Aorta (tissue), 5 donors: ENCODE measurements at regions of chr4 and their contacts with region 1.

Region 1: GRCh38 chr4:40149960-40150385 is 46.9 kb upstream of the RHOH start:
- DNase-seq: no peak
- ATAC-seq: no peak
- H3K4me3 ChIP-seq: no peak overlapping the region
- H3K27ac ChIP-seq: no peak overlapping the region
- H3K4me1 ChIP-seq: no peaks in the 10 kb centered on the region
- H3K27me3 ChIP-seq: no peaks in the 10 kb centered on the region

Region 2: GRCh38 chr4:40309250-40309774 is 159.3 kb after region 1 on chr4:
- intact Hi-C with region 1: loop called (anchors 5 to 10 kb)
- DNase-seq: peak; percentile 92 to 96
- ATAC-seq: peak; percentile 86
- H3K4me3 ChIP-seq: no peak overlapping the region
- H3K27ac ChIP-seq: no peak overlapping the region
- H3K4me1 ChIP-seq: no peaks in the 10 kb centered on the region
- H3K27me3 ChIP-seq: peaks cover 0 to 2% of the 10 kb centered on the region in 2 donors

Region 3: DNA sequence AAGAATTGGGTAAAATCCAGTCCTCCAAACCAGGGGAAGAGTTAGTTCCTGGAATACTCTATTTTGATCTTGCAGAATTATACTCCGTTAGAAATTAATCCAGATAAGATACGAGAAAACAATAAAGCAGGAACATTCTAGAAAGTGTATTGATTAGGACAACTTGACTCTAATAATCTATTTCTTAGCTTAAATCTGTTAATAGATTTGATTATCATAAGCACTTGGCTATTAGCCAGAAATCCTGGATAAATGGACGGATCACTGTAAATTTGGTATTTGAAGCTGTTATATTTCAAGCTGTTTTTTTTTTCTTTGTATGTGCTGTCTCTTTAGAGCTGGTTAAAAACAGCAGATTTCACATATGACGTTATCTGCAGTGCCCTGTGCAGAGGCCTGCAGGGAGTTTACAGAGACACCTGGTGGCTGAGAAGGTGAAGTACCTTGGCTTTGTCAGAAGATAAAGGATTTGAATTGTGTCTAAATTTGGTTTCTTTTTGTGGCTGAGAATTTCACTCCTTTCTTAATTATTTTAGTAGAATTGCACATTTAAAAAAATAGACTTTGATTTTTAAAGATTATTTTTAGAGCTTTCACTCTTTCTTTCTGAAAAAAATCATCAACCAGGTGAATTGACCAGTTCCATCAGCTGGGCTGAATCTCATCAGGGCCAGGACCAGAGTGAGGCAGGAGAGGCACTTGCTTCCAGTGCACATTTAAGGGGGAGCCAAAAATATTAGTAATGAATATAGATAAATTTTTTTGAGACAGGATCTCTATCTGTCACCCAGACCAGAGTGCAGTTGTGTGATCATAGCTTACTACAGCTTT is 175.4 kb after region 1 on chr4:
- intact Hi-C with region 1: loop called in 1 of 2 experiments (anchors 10 kb)
- DNase-seq: no peak
- ATAC-seq: peak; percentile 66
- H3K4me3 ChIP-seq: no peak overlapping the region
- H3K27ac ChIP-seq: no peak overlapping the region
- H3K4me1 ChIP-seq: no peaks in the 10 kb centered on the region
- H3K27me3 ChIP-seq: no peaks in the 10 kb centered on the region